ENCODE measurements at regions of chr1 and their contacts with region 1.

Region 1: DNA sequence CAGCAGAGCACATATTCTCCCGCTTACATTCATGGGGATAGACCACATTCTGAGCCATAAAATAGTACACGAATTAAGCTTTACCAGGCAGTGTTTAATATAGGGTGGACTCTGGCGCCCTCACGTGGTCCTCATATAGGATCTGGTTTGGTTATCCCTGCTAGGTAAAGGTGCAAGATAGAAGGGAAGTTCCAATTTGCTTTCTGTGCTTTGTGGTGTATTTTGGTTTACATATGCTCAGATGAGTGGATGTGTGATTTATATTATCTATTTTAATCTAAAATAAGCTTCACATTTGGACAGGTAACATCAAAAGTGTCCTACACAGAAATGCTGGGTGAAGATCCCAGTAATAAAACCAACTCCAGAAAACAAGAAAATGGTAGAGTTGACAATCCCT is 3.6 kb downstream of the CR1 start:
- DNase-seq: peak; percentile 90
- ATAC-seq: peak; percentile 99
- H3K4me3 ChIP-seq: no peak overlapping the region
- H3K27ac ChIP-seq: no peak overlapping the region
- H3K4me1 ChIP-seq: no peaks in the 10 kb centered on the region
- H3K27me3 ChIP-seq: peaks cover 80% of the 10 kb centered on the region
- CTCF ChIP-seq: peak; percentile 99

Region 2: GRCh38 chr1:207084701-207085180 is 414.8 kb before region 1 on chr1:
- CTCF ChIA-PET with region 1: interaction called, 10 read pairs
- POLR2A ChIA-PET with region 1: no interaction called
- intact Hi-C with region 1: loop called (anchors 1 kb)
- DNase-seq: peak; percentile 95
- ATAC-seq: peak; percentile 89
- H3K4me3 ChIP-seq: no peak overlapping the region
- H3K27ac ChIP-seq: no peak overlapping the region
- H3K4me1 ChIP-seq: peaks cover 13% of the 10 kb centered on the region
- H3K27me3 ChIP-seq: no peaks in the 10 kb centered on the region
- CTCF ChIP-seq: peak; percentile 94

Region 3: GRCh38 chr1:207181838-207182237 is 317.7 kb before region 1 on chr1:
- CTCF ChIA-PET with region 1: interaction called, 3 read pairs
- POLR2A ChIA-PET with region 1: no interaction called
- intact Hi-C with region 1: loop called (anchors 1 kb)
- DNase-seq: peak; percentile 61
- ATAC-seq: peak; percentile 51
- H3K4me3 ChIP-seq: no peak overlapping the region
- H3K27ac ChIP-seq: no peak overlapping the region
- H3K4me1 ChIP-seq: no peaks in the 10 kb centered on the region
- H3K27me3 ChIP-seq: peaks cover 3% of the 10 kb centered on the region; the same call in 1 of the 2 replicates
- CTCF ChIP-seq: peak; percentile 82

Region 4: DNA sequence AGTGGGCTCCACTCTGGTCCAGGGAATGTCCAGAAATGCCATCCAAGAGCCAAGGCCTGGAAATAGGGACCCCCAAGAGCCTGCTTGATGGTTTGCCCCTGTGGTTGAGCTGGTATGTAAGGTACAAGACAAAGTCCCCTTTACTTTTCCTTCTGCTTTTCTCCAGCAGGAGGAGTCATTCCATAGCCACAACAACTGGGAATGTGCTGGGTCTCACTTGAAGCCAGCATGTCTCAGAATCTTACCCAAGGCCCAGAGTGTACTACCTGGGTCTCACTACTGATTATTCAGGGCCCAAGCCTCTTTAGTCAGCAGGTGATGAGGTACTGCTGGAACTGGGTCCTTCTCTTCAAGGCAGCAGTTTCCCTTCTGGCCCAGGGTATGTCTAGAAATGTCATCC is 240.2 kb before region 1 on chr1:
- CTCF ChIA-PET with region 1: no interaction called
- POLR2A ChIA-PET with region 1: no interaction called
- intact Hi-C with region 1: loop called (anchors 1 kb)
- DNase-seq: peak; percentile 86
- ATAC-seq: peak; percentile 84
- H3K4me3 ChIP-seq: no peak overlapping the region
- H3K27ac ChIP-seq: no peak overlapping the region
- H3K4me1 ChIP-seq: peaks cover 5% of the 10 kb centered on the region; the same call in 1 of the 2 replicates
- H3K27me3 ChIP-seq: no peaks in the 10 kb centered on the region
- CTCF ChIP-seq: peak; percentile 90